ENCODE measurements at regions of chr11 and their contacts with region 1.

Region 1: GRCh38 chr11:108647701-108648527 is 17.0 kb upstream of the DDX10 start:
- DNase-seq: peak; percentile 85
- H3K4me3 ChIP-seq: no peak overlapping the region
- H3K27ac ChIP-seq: peak overlapping the region; percentile 68
- H3K4me1 ChIP-seq: peaks cover 17% of the 10 kb centered on the region
- H3K27me3 ChIP-seq: no peaks in the 10 kb centered on the region
- CTCF ChIP-seq: peak; percentile 86 to 91

Region 2: DNA sequence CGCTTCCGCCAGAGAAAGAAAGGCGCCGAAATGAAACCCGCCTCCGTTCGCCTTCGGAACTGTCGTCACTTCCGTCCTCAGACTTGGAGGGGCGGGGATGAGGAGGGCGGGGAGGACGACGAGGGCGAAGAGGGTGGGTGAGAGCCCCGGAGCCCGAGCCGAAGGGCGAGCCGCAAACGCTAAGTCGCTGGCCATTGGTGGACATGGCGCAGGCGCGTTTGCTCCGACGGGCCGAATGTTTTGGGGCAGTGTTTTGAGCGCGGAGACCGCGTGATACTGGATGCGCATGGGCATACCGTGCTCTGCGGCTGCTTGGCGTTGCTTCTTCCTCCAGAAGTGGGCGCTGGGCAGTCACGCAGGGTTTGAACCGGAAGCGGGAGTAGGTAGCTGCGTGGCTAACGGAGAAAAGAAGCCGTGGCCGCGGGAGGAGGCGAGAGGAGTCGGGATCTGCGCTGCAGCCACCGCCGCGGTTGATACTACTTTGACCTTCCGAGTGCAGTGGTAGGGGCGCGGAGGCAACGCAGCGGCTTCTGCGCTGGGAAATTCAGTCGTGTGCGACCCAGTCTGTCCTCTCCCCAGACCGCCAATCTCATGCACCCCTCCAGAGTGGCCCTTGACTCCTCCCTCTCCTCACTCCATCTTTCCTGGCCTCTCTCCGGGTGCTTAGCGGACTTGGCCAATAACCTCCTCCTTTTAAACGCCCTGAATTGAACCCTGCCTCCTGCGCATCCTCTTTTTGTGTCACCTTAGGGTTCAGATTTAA is 425.0 kb before region 1 on chr11 and contains the start of gene ATM:
- CTCF ChIA-PET with region 1: interaction called, 6 read pairs
- dilution Hi-C with region 1: no loop called
- in situ Hi-C with region 1: loop called (anchors 25 kb)
- intact Hi-C with region 1: loop called (anchors 1 kb)
- DNase-seq: peak; percentile 99
- H3K4me3 ChIP-seq: peak within 1 kb of the TSS; percentile 82 to 92 (median 88)
- H3K27ac ChIP-seq: peak within 1 kb of the TSS; percentile 99
- H3K4me1 ChIP-seq: peaks cover 29% of the 10 kb centered on the region
- H3K27me3 ChIP-seq: no peaks in the 10 kb centered on the region
- CTCF ChIP-seq: peak; percentile 77 to 92
- total RNA-seq, gene ATM: 45.0 to 69.7 TPM

Region 3: GRCh38 chr11:108340970-108341369 is 306.9 kb before region 1 on chr11:
- CTCF ChIA-PET with region 1: no interaction called
- dilution Hi-C with region 1: no loop called
- in situ Hi-C with region 1: no loop called
- intact Hi-C with region 1: loop called (anchors 1 kb)
- DNase-seq: peak; percentile 96
- H3K4me3 ChIP-seq: no peak overlapping the region
- H3K27ac ChIP-seq: peak overlapping the region; percentile 18
- H3K4me1 ChIP-seq: peaks cover 10% of the 10 kb centered on the region
- H3K27me3 ChIP-seq: no peaks in the 10 kb centered on the region
- CTCF ChIP-seq: no peak

Region 4: DNA sequence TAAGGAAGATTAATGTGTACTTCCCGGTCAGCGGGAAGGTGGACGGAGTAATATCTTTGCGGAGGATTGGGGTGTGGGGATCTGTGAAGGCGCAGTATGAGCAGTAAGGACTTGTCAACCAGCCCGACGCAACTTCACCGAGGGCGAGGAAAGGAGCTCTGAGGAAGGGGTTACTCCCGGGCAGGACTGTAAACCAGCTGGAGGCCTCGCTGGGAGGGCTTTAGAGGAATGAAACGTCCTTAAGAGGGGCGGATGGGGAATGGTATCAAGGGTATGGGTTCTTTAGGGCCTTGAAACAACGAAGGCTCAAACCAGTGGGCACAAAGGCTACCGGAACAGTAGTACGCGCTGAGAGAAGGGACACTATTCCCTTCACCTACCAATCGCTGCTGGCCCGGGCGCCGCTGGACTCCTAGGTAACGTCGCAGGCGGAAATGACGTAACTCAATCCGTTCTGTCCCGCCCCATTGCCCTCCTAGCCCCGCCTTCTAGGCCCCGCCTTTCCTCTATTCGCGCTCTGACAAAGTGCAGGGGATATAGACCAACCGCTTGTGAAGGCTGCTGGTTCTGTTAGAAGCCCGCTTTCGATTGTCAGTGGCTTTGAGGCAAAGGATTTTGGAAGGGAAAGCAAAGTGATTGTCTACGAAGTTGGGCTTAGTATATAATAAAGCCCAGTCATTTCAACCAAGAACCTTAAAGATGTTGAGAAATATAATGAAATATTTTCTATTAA is 180.7 kb before region 1 on chr11 and contains the start of gene C11orf65:
- CTCF ChIA-PET with region 1: no interaction called
- dilution Hi-C with region 1: no loop called
- in situ Hi-C with region 1: no loop called
- intact Hi-C with region 1: loop called (anchors 1 kb)
- DNase-seq: peak; percentile 94
- H3K4me3 ChIP-seq: peak within 1 kb of the TSS; percentile 58 to 70 (median 62)
- H3K27ac ChIP-seq: peak within 1 kb of the TSS; percentile 96
- H3K4me1 ChIP-seq: no peaks in the 10 kb centered on the region
- H3K27me3 ChIP-seq: no peaks in the 10 kb centered on the region
- CTCF ChIP-seq: no peak
- total RNA-seq, gene C11orf65: 0.67 to 1.1 TPM

Region 5: GRCh38 chr11:108588287-108588686 is 59.6 kb before region 1 on chr11:
- CTCF ChIA-PET with region 1: no interaction called
- dilution Hi-C with region 1: no loop called
- in situ Hi-C with region 1: loop called in 1 of 2 experiments (anchors 5 kb)
- intact Hi-C with region 1: loop called (anchors 1 kb)
- DNase-seq: no peak
- H3K4me3 ChIP-seq: no peak overlapping the region
- H3K27ac ChIP-seq: no peak overlapping the region
- H3K4me1 ChIP-seq: peaks cover 8% of the 10 kb centered on the region
- H3K27me3 ChIP-seq: no peaks in the 10 kb centered on the region
- CTCF ChIP-seq: peak in 1 of 2 donors; percentile 36

Region 6: DNA sequence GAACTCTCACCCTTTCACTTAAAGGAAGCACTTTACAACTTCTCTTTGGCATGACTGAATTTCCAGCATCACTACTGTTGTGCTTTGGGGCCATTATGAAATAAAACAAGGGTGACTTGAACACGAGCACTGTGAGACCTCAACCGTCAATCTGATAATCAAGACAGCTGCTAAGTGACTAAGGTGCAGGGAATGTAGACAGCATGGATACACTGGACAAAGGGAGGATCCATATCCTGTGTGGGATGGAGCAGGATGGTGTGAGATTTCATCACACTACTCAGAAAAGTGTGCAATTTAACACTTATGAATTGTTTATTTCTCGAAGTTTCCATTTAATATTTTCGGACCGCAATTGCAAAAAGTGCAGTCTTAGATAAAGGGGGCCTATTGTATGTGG is 38.2 kb before region 1 on chr11:
- CTCF ChIA-PET with region 1: no interaction called
- dilution Hi-C with region 1: no loop called
- in situ Hi-C with region 1: no loop called
- intact Hi-C with region 1: loop called (anchors 5 kb)
- DNase-seq: peak; percentile 69
- H3K4me3 ChIP-seq: no peak overlapping the region
- H3K27ac ChIP-seq: peak overlapping the region; percentile 21
- H3K4me1 ChIP-seq: peaks cover 37% of the 10 kb centered on the region
- H3K27me3 ChIP-seq: no peaks in the 10 kb centered on the region
- CTCF ChIP-seq: no peak

Region 7: GRCh38 chr11:108871152-108871551 is 223.2 kb after region 1 on chr11:
- CTCF ChIA-PET with region 1: no interaction called
- dilution Hi-C with region 1: no loop called
- in situ Hi-C with region 1: no loop called
- intact Hi-C with region 1: loop called (anchors 1 kb)
- DNase-seq: peak; percentile 56
- H3K4me3 ChIP-seq: no peak overlapping the region
- H3K27ac ChIP-seq: no peak overlapping the region
- H3K4me1 ChIP-seq: peaks cover 15% of the 10 kb centered on the region
- H3K27me3 ChIP-seq: no peaks in the 10 kb centered on the region
- CTCF ChIP-seq: peak; percentile 40 to 59